ENCODE measurements at regions of chr2 and their contacts with region 1.

Region 1: GRCh38 chr2:3461801-3462492 is 57.4 kb downstream of the ADI1 start:
- DNase-seq: peak; percentile 32
- ATAC-seq: no peak

Region 2: GRCh38 chr2:2919026-2919969 is 542.6 kb before region 1 on chr2:
- intact Hi-C with region 1: no loop called
- DNase-seq: no peak
- ATAC-seq: no peak

Region 3: DNA sequence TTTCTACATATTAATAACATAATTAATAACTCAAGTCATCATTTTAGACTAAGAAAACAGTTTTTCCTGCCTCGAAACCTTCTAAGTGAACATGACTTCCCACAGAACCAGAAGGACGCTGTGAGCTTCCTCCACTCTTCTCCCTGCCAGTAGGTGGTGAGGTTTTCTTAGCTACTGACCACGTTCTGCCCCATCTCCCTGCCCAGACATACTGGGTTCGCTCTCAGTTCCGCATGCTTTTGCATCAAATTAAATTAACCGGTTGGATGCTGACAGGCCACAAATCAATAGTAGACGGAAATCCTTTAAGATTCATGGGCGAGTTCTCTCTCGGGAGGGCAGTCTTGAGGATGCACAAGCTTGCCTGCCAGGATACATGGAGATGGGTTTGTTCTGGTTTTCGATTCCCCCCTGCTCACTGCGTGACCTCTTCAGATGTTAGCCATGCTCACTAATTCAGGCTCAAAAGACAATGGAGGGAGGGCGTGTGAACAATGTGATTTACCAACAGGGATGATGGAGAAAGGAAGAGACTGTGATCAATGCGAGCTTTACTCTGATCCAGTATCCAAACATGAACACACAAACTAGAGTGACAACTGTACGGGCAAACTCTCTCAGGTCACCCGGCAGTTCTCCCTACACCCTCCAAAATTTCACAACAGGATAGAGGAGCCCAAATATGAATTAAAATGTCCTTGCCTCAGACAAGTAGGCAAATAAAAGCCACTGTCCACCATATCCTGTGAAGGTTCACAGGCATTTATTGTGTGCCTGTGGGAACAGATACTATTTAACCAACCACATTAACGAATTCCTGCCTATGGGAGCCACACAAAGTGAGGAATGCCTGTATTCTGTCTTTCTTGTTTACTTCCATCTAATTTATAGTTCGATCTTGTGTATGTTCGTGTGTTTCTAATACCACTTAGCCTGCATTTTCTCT is 460.1 kb before region 1 on chr2:
- intact Hi-C with region 1: loop called (anchors 5 kb)
- DNase-seq: no peak
- ATAC-seq: peak; percentile 68

Region 4: GRCh38 chr2:3265981-3266924 is 195.7 kb before region 1 on chr2:
- intact Hi-C with region 1: no loop called
- DNase-seq: no peak
- ATAC-seq: no peak

Region 5: DNA sequence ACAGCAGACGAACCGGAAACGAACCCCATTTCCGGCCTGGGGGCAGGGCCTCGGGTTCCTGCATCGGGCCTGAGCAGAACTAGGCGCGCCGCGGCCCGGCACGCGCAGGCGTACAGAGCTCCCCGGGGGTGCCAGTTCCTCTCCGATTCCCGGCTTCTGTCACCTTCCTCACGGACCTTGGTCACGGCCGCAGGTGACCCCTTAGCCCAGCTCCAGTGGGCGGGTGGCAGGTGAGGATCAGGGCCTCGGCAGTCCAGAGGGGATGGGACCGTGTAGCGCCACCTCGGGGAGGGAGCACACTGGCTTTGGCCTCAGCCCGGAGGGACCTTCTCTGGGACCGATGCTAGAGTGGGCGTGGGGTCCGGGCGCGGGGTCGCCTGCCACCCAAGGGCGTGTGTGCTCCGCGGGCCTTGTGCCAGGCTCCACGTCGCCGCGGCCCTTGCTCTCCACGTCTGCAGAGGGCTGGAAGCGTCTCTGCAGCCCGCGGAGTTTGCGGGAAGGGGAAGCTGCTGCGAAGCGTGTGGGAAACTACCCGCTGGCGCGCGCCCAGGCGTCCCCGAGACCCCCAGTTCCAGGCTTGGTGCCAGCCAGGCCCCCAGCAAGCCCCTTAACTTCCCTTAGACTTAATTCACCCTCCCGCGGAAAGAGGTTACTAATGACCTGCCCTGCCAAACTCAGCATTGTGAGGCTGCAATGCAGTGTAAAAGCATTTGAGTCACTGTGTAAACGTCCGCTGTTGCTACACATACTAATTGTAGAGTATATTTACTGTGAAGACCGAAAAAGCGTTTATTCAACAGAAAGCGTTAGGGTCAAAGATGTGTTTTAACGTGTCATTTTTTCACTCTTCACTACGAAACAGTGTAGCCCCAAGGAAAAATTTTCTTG is 82.1 kb before region 1 on chr2 and contains the start of gene TRAPPC12:
- intact Hi-C with region 1: loop called (anchors 10 kb)
- DNase-seq: peak; percentile 96
- ATAC-seq: peak; percentile 93
- total RNA-seq, gene TRAPPC12: 110 TPM

Region 6: DNA sequence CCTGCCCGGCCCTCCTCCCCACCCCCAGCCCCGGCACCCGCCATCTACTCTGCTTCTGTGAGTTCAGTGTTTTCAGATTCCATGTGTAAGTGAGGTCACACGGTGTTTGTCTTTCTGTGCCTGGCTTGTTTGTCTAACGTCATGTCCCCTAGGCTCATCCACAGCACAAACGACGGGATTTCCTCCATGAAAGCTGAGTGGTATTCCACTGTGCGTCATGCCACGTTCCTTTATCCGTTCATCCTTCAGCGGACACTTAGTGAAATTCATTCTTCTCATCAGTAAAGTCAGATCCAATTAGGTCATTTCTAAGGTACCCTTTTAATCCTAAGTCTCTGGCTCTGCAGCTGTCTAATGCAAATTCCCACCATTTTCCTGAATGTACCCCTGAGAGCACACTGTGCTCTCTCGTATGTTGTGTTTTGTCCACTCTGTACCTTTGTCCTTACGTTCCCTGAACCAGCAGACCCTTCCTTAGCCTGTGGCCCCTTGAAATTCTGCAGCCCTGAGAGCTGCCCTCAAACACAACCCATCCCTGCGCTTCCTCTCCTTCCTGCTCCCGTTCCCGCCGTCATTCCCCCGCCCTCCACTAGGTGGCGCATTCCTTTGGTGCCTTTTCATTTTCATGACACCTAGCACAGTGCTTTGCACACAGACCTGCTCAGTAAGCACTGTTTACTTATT is 38.3 kb before region 1 on chr2:
- intact Hi-C with region 1: loop called (anchors 2 kb)
- DNase-seq: peak; percentile 83
- ATAC-seq: peak; percentile 55

Region 7: GRCh38 chr2:3435445-3435844 is 26.5 kb before region 1 on chr2:
- intact Hi-C with region 1: no loop called
- DNase-seq: no peak
- ATAC-seq: no peak

Region 8: DNA sequence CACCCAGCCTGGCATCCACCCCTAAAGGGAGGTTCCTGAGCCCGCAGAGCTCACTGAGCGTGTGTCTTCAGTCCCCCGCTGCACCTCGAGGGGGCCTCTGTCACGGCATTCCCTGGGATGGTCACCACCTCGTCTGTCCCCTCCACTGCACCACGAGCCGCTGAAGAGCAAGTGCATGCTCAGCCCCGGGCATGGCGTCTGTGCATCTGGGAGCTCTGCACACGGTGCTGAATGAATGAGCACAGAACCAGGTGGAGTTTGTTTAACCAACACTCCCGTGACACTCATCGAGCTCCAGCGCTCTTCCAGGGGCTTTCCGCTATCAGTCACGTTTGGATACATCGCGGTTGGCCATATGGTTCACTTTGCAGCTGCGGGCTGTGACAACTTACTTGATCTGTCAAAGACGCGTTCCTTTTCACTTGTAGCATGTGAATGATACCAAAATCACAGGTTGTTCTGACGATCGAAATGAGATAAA is 205.2 kb after region 1 on chr2:
- intact Hi-C with region 1: no loop called
- DNase-seq: no peak
- ATAC-seq: peak; percentile 54

Measured in Right ventricle myocardium inferior (tissue), 1 donor.